ENCODE measurements at regions of chr12 and their contacts with region 1.

Region 1: GRCh38 chr12:93569656-93570551 is 2.6 kb upstream of the SOCS2 start:
- DNase-seq: peak; percentile 88 to 97 (median 90)
- ATAC-seq: peak; percentile 82
- H3K4me3 ChIP-seq: peak overlapping the region; percentile 62 to 82
- H3K27ac ChIP-seq: peak overlapping the region; percentile 85 to 96
- H3K4me1 ChIP-seq: peaks cover 0 to 47% of the 10 kb centered on the region in 2 donors
- H3K27me3 ChIP-seq: peaks cover 0 to 68% of the 10 kb centered on the region in 2 donors
- CTCF ChIP-seq: peak; percentile 64 to 76

Region 2: DNA sequence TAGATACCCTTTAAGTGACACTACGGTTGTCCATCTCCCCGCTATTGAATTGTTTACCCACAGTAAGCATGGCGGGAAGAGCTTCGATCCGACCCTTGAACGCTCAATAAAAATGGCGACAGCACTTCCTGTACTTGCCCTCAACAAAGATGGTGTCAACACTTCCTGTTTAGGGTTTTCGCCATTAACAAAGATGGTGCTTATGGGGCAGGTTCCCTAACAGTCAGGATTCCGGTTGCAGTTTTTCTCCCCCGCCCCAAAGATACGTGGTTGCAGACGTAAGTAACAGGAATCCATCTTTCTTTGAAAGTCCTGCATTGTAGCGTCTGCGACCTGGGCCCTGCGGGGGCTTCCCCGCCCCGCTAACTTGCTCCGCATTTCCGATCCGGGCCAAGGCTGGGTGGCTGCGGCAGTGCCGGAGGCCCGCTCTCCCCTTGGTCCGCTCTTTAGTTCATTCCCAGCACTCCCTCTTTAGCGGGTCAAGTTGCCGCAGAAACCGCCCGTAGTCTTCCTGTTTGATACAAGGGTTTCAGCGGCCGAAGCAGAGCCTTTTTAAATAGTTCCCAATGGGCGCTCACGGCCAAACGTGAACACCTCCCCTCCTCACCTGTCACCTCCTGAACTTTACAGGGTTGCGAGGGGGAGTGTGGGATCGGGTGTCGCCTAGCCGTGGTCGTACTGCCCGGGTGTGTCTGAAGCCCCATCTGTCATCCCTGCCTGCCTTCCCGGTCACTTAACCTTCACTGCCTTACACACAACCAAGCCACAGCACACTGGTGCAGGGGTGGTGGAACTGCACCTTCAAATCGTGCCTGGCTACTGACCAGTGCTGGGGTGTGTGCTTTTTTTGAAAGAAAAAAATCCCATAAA is 107.5 kb after region 1 on chr12 and contains the start of gene CRADD:
- intact Hi-C with region 1: loop called in 1 of 2 experiments (anchors 5 kb)
- DNase-seq: peak; percentile 84 to 97 (median 93)
- ATAC-seq: peak; percentile 98
- H3K4me3 ChIP-seq: peak within 1 kb of the TSS; percentile 48 to 53
- H3K27ac ChIP-seq: peak within 1 kb of the TSS; percentile 94 to 99
- H3K4me1 ChIP-seq: peaks cover 10 to 22% of the 10 kb centered on the region in 2 donors
- H3K27me3 ChIP-seq: no peaks in the 10 kb centered on the region
- CTCF ChIP-seq: no peak
- polyA plus RNA-seq, gene CRADD: 8.4 to 10.9 (median 9.4) TPM

Region 3: GRCh38 chr12:93742110-93742934 is 172.4 kb after region 1 on chr12:
- intact Hi-C with region 1: loop called in 1 of 2 experiments (anchors 5 kb)
- DNase-seq: peak; percentile 68 to 94 (median 77)
- ATAC-seq: peak; percentile 95
- H3K4me3 ChIP-seq: peak overlapping the region; percentile 38 to 44
- H3K27ac ChIP-seq: peak overlapping the region; percentile 90 to 94
- H3K4me1 ChIP-seq: peaks cover 10 to 42% of the 10 kb centered on the region in 2 donors
- H3K27me3 ChIP-seq: no peaks in the 10 kb centered on the region
- CTCF ChIP-seq: peak in 1 of 2 donors; percentile 10

Region 4: DNA sequence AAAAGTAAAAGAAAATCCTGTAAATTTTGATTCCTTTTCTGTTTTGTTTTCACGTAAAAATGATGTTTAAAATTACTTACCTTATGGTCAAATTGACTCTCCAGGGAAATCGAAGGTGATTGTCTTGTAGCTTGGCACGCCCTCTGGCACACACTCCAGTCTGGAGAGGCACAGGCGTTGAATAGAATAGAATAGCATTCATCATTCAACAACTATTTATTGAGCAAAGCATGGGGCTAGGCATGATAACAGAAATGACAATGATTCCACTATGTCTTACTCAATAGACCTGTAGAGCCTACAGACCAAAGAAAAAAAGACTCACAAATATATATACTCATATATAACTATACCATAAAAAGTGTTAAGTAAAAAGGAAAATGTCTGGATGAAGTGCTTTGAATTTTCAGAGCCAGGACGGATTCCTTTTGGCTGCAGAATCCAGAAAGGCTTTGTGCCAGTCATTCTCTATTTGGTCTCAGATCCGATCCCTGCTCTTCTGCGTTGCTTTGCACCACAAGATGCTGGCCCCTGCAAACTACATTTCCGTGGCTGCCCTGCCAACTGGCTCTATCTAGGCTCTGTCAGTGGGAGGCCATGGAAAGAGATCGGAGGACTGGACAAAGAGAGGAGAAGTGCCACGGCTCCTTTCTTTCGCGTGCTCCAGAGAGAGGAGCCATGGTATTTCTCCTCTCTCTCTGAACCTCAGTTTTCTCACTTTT is 339.1 kb after region 1 on chr12:
- intact Hi-C with region 1: no loop called
- DNase-seq: no peak
- ATAC-seq: peak; percentile 38
- H3K4me3 ChIP-seq: no peak overlapping the region
- H3K27ac ChIP-seq: no peak overlapping the region
- H3K4me1 ChIP-seq: no peaks in the 10 kb centered on the region
- H3K27me3 ChIP-seq: no peaks in the 10 kb centered on the region
- CTCF ChIP-seq: no peak

Region 5: DNA sequence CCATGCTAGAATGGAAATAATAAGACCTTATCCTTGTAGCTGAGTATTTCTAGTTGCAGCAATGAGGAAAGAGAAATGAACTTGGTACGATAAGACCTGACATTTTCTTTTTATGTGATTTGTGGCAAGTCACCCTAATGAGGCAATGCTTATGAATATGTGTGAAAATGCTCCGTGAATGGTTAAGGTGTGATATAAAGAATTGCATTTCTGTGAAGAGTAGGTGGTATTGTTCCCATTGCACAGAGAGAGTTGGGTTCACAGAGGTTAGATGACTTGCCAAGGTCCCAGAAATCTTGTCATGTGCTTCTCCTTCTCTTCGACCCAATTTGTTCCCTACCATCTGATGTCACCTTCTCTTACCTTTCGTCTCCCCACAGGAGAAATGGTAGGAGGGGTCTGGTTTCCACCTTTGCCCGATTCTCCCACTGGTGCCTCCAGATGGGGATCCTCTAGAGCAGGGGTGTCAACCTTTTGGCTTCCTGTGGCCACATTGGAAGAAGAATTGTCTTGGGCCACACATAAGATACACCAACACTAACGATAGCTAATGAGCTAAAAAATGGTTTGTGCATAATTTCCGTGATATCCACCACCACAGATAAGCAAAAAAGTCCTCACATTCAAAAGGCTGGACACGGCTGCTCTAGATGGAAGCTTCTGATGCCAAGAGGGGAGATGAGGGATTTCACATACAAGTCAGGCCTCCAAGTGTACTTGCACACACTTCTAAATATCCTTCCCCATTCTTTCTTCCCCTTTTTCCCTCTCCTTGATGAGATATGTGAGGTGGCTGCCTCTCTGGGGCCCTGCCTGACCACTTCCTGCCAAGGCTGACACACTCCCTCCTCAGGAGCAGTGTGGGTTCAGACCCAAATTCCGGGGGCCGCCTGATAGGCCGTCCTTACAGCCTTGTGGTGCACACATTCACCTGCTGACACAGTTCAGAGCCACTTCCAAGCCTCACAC is 674.5 kb after region 1 on chr12:
- intact Hi-C with region 1: no loop called
- DNase-seq: peak in 2 of 4 donors; percentile 49 to 88
- ATAC-seq: peak; percentile 63
- H3K4me3 ChIP-seq: no peak overlapping the region
- H3K27ac ChIP-seq: peak overlapping the region in 1 of 2 donors; percentile 71
- H3K4me1 ChIP-seq: peaks cover 0 to 51% of the 10 kb centered on the region in 2 donors
- H3K27me3 ChIP-seq: no peaks in the 10 kb centered on the region
- CTCF ChIP-seq: no peak

Measured in left lung (tissue), 14 donors.